ENCODE measurements at regions of chr10 and their contacts with region 1.

Region 1: DNA sequence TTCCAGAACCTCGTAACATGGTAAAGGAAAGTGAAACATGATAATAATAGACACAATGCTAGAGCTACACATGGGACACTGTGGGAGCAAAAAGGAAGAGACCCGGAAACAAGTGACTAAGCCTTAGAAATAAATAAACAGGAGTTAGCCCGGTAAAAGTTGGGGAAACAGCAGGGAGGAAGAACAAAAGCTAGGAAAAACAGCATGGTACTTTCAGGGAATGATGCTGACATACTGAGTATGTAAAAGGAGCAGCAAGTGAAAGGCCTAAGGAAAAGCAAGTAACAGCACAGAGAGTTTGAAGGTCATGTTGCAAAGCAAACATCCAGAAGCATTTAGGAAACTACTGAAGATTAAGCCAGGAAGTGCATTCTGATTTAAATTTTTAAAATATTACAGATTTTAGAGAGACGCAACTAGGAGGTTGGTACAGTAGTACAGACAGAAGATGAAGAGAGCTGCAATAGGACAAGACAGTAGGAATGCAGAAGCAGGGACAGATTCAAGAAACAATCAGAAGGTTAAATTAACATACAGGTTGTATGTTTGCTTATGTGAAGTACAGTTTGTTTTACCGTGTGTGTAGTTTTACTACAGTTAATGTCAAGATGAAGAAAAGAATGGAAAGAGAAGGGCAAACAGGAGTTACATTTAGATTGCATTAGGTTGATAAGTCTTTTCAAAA is 63.7 kb downstream of the ARHGAP12 start:
- DNase-seq: no peak
- ATAC-seq: peak; percentile 15; the same call in 1 of the 2 replicates
- H3K4me3 ChIP-seq: peak overlapping the region in 1 of 2 experiments; percentile 37; a peak in 3 of 4 replicates
- H3K27ac ChIP-seq: peak overlapping the region; percentile 63
- H3K4me1 ChIP-seq: peaks cover 65 to 83% of the 10 kb centered on the region in 2 experiments
- H3K27me3 ChIP-seq: no peaks in the 10 kb centered on the region
- CTCF ChIP-seq: no peak
- POLR2A ChIP-seq: no peak
- RAD21 ChIP-seq: no peak

Region 2: GRCh38 chr10:31928549-31929260 is 63.7 kb after region 1 on chr10 and contains the start of gene ARHGAP12:
- CTCF ChIA-PET with region 1: interaction called, 4 read pairs
- POLR2A ChIA-PET with region 1: interaction called, 4 read pairs
- RAD21 ChIA-PET with region 1: interaction called in 1 of 2 experiments, 6 read pairs
- intact Hi-C with region 1: loop called (anchors 5 kb)
- DNase-seq: no peak
- ATAC-seq: peak; percentile 81
- H3K4me3 ChIP-seq: peak within 1 kb of the TSS; percentile 73 to 81
- H3K27ac ChIP-seq: peak within 1 kb of the TSS; percentile 98
- H3K4me1 ChIP-seq: peaks cover 52 to 80% of the 10 kb centered on the region in 2 experiments
- H3K27me3 ChIP-seq: no peaks in the 10 kb centered on the region
- CTCF ChIP-seq: no peak
- POLR2A ChIP-seq: peak; percentile 76
- RAD21 ChIP-seq: no peak
- total RNA-seq, gene ARHGAP12: 80.3 TPM

Region 3: GRCh38 chr10:31947144-31947926 is 82.4 kb after region 1 on chr10:
- CTCF ChIA-PET with region 1: interaction called, 6 read pairs
- POLR2A ChIA-PET with region 1: interaction called, 3 read pairs
- RAD21 ChIA-PET with region 1: interaction called, 4 to 5 read pairs
- intact Hi-C with region 1: loop called (anchors 1 kb)
- DNase-seq: peak; percentile 79
- ATAC-seq: peak; percentile 65
- H3K4me3 ChIP-seq: peak overlapping the region in 1 of 2 experiments; percentile 6; a peak in 2 of 4 replicates
- H3K27ac ChIP-seq: peak overlapping the region; percentile 55
- H3K4me1 ChIP-seq: peaks cover 69 to 84% of the 10 kb centered on the region in 2 experiments
- H3K27me3 ChIP-seq: no peaks in the 10 kb centered on the region
- CTCF ChIP-seq: peak; percentile 39 to 67 (median 54); a peak in 4 of 6 replicates
- POLR2A ChIP-seq: no peak
- RAD21 ChIP-seq: peak; percentile 94

Region 4: DNA sequence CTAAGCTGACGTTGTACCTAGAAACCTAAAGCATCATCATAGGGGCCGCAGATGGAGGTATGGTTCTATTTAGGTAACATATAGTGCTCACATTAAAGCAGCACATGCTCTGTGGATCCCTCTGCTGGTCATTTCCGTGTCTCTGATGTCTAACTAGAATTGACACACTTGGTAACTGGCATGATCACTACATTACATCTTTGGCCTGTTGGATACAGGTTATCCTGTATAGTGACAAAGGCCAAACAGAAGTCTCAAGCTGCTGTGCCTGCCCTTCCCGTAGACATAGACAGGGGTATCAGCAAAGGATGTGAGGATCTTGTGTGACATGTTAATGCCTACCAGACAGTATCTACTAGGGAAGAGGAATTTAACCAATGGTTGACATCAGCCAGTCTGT is 140.1 kb after region 1 on chr10:
- CTCF ChIA-PET with region 1: interaction called, 9 read pairs
- POLR2A ChIA-PET with region 1: no interaction called
- RAD21 ChIA-PET with region 1: no interaction called
- intact Hi-C with region 1: loop called (anchors 1 kb)
- DNase-seq: peak; percentile 43
- ATAC-seq: peak; percentile 84
- H3K4me3 ChIP-seq: no peak overlapping the region
- H3K27ac ChIP-seq: no peak overlapping the region
- H3K4me1 ChIP-seq: peaks cover 0 to 6% of the 10 kb centered on the region in 2 experiments; a peak in 1 of 4 replicates
- H3K27me3 ChIP-seq: no peaks in the 10 kb centered on the region
- CTCF ChIP-seq: peak; percentile 39 to 78 (median 69); a peak in 5 of 6 replicates
- POLR2A ChIP-seq: no peak
- RAD21 ChIP-seq: peak; percentile 66

Region 5: DNA sequence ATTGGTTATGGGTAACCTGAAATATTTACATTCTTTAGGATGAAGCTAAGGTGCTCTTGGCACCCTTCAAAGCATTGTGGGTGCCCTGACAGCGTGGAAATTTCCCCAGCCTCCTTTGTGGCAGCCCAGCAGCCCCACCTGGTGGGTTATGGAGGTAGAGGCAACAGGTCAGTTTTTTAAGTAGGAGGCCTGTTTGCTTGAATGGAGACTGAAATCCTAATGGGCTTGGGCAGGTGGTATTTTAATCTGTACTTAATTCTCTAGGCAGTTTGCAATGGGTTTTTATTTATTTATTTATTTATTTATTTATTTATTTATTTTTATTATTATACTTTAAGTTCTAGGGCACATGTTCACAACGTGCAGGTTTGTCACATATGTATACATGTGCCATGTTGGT is 342.6 kb after region 1 on chr10:
- CTCF ChIA-PET with region 1: interaction called, 8 read pairs
- POLR2A ChIA-PET with region 1: no interaction called
- RAD21 ChIA-PET with region 1: no interaction called
- intact Hi-C with region 1: loop called (anchors 10 kb)
- DNase-seq: peak; percentile 35
- ATAC-seq: peak; percentile 71
- H3K4me3 ChIP-seq: no peak overlapping the region
- H3K27ac ChIP-seq: no peak overlapping the region
- H3K4me1 ChIP-seq: peaks cover 3 to 13% of the 10 kb centered on the region in 2 experiments; a peak in 1 of 4 replicates
- H3K27me3 ChIP-seq: no peaks in the 10 kb centered on the region
- CTCF ChIP-seq: peak; percentile 61 to 83 (median 70); a peak in 5 of 6 replicates
- POLR2A ChIP-seq: no peak
- RAD21 ChIP-seq: peak; percentile 85

Measured in HCT116 (cell line).